CD8-positive, alpha-beta T cell (primary cell): ENCODE measurements at regions of chr1 and their contacts with region 1.

Region 1: GRCh38 chr1:159071970-159072582 is 4.5 kb downstream of the AIM2 start:
- DNase-seq: peak in 2 of 9 experiments; percentile 63 to 73
- ATAC-seq: no peak
- H3K4me3 ChIP-seq: no peak overlapping the region
- H3K4me3 Mint-ChIP-seq: no peak overlapping the region
- H3K27ac ChIP-seq: no peak overlapping the region
- H3K27ac Mint-ChIP-seq: no peak overlapping the region
- H3K4me1 ChIP-seq: peaks cover 14% of the 10 kb centered on the region
- H3K4me1 Mint-ChIP-seq: peaks cover 24% of the 10 kb centered on the region
- H3K27me3 ChIP-seq: no peaks in the 10 kb centered on the region
- H3K27me3 Mint-ChIP-seq: no peaks in the 10 kb centered on the region
- CTCF ChIP-seq: peak; percentile 97

Region 2: GRCh38 chr1:157580179-157580827 is 1491.8 kb before region 1 on chr1:
- CTCF ChIA-PET with region 1: interaction called, 3 read pairs
- POLR2A ChIA-PET with region 1: no interaction called
- intact Hi-C with region 1: loop called in 1 of 2 experiments (anchors 5 kb)
- DNase-seq: peak in 6 of 9 experiments; percentile 5 to 73 (median 22)
- ATAC-seq: no peak
- H3K4me3 ChIP-seq: no peak overlapping the region
- H3K4me3 Mint-ChIP-seq: no peak overlapping the region
- H3K27ac ChIP-seq: no peak overlapping the region
- H3K27ac Mint-ChIP-seq: no peak overlapping the region
- H3K4me1 ChIP-seq: no peaks in the 10 kb centered on the region
- H3K4me1 Mint-ChIP-seq: no peaks in the 10 kb centered on the region
- H3K27me3 ChIP-seq: no peaks in the 10 kb centered on the region
- H3K27me3 Mint-ChIP-seq: peaks cover 3% of the 10 kb centered on the region
- CTCF ChIP-seq: peak; percentile 75

Region 3: GRCh38 chr1:157992031-157992832 is 1079.8 kb before region 1 on chr1:
- CTCF ChIA-PET with region 1: no interaction called
- POLR2A ChIA-PET with region 1: no interaction called
- intact Hi-C with region 1: loop called in 1 of 2 experiments (anchors 5 kb)
- DNase-seq: peak in 8 of 9 experiments; percentile 6 to 59 (median 40)
- ATAC-seq: no peak
- H3K4me3 ChIP-seq: no peak overlapping the region
- H3K4me3 Mint-ChIP-seq: no peak overlapping the region
- H3K27ac ChIP-seq: no peak overlapping the region
- H3K27ac Mint-ChIP-seq: no peak overlapping the region
- H3K4me1 ChIP-seq: peaks cover 5% of the 10 kb centered on the region
- H3K4me1 Mint-ChIP-seq: peaks cover 15% of the 10 kb centered on the region
- H3K27me3 ChIP-seq: peaks cover 4 to 13% of the 10 kb centered on the region in 2 experiments
- H3K27me3 Mint-ChIP-seq: peaks cover 39% of the 10 kb centered on the region
- CTCF ChIP-seq: peak; percentile 70

Region 4: GRCh38 chr1:158149577-158150269 is 922.4 kb before region 1 on chr1:
- CTCF ChIA-PET with region 1: no interaction called
- POLR2A ChIA-PET with region 1: no interaction called
- intact Hi-C with region 1: loop called in 1 of 2 experiments (anchors 10 kb)
- DNase-seq: peak; percentile 24 to 83 (median 59)
- ATAC-seq: peak; percentile 76
- H3K4me3 ChIP-seq: peak overlapping the region; percentile 67 to 72
- H3K4me3 Mint-ChIP-seq: peak overlapping the region; percentile 99
- H3K27ac ChIP-seq: peak overlapping the region in 1 of 2 experiments; percentile 55
- H3K27ac Mint-ChIP-seq: peak overlapping the region; percentile 91
- H3K4me1 ChIP-seq: peaks cover 17% of the 10 kb centered on the region
- H3K4me1 Mint-ChIP-seq: peaks cover 33% of the 10 kb centered on the region
- H3K27me3 ChIP-seq: no peaks in the 10 kb centered on the region
- H3K27me3 Mint-ChIP-seq: peaks cover 5% of the 10 kb centered on the region
- CTCF ChIP-seq: no peak

Region 5: DNA sequence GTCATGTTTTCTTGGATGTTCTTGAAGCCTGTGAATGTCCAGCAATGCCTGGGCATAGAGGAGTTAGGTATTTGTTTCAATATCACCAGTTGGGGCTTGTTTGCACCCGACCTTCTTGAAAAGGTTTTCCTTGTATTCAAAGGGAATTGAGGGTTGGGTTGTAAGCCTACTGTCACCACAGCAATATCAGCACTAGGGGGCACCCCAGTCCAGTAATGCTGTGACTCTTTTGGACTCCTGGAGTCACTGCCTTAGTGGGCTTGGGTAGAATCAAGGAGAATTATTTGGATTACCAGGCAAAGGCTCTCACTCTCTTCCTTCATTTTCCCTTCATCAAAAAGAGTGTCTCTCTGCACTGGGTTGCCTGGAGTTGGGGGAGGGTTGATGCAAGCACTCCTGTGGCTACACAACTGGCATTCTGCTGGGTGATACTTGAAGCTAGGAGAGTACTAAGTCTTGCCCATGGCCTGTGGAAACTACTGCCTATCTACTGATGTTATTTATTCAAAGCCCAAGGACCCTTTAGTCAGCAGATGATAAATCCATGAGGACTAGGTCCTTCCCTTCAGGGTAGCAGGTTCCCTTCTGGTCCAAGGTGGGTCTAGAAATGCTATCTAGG is 565.6 kb before region 1 on chr1:
- CTCF ChIA-PET with region 1: no interaction called
- POLR2A ChIA-PET with region 1: no interaction called
- intact Hi-C with region 1: loop called (anchors 1 to 5 kb)
- DNase-seq: peak in 6 of 9 experiments; percentile 2 to 53 (median 26)
- ATAC-seq: no peak
- H3K4me3 ChIP-seq: no peak overlapping the region
- H3K4me3 Mint-ChIP-seq: no peak overlapping the region
- H3K27ac ChIP-seq: no peak overlapping the region
- H3K27ac Mint-ChIP-seq: peak overlapping the region; percentile 20
- H3K4me1 ChIP-seq: no peaks in the 10 kb centered on the region
- H3K4me1 Mint-ChIP-seq: no peaks in the 10 kb centered on the region
- H3K27me3 ChIP-seq: peaks cover 0 to 1% of the 10 kb centered on the region in 2 experiments
- H3K27me3 Mint-ChIP-seq: peaks cover 14% of the 10 kb centered on the region
- CTCF ChIP-seq: peak; percentile 24

Region 6: DNA sequence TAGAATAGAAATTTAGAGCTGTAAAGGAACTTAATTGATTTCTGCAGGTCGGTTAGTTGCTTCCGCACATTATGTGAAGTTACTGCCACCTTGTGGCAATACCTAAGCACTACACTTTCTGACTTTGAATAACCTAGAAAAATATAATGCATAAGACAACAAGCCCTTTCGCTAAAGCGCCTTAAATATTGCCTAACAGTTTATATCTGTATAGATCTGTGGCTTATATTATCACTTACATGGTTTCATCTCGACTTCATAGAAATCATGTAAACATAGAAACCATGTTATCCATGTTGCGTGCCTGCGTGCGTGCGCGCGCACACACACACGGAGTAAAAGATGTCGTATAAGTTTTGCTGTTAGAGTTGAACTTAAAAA is 73.3 kb before region 1 on chr1:
- CTCF ChIA-PET with region 1: interaction called, 13 read pairs
- POLR2A ChIA-PET with region 1: no interaction called
- intact Hi-C with region 1: loop called (anchors 1 to 5 kb)
- DNase-seq: peak in 7 of 9 experiments; percentile 13 to 82 (median 38)
- ATAC-seq: peak; percentile 85
- H3K4me3 ChIP-seq: no peak overlapping the region
- H3K4me3 Mint-ChIP-seq: peak overlapping the region; percentile 54
- H3K27ac ChIP-seq: no peak overlapping the region
- H3K27ac Mint-ChIP-seq: peak overlapping the region; percentile 61
- H3K4me1 ChIP-seq: peaks cover 6% of the 10 kb centered on the region
- H3K4me1 Mint-ChIP-seq: peaks cover 30% of the 10 kb centered on the region
- H3K27me3 ChIP-seq: no peaks in the 10 kb centered on the region
- H3K27me3 Mint-ChIP-seq: no peaks in the 10 kb centered on the region
- CTCF ChIP-seq: peak; percentile 91

Region 7: GRCh38 chr1:159056069-159056698 is 15.9 kb before region 1 on chr1:
- CTCF ChIA-PET with region 1: interaction called, 11 read pairs
- POLR2A ChIA-PET with region 1: no interaction called
- intact Hi-C with region 1: no loop called
- DNase-seq: peak in 1 of 9 experiments; percentile 21
- ATAC-seq: no peak
- H3K4me3 ChIP-seq: no peak overlapping the region
- H3K4me3 Mint-ChIP-seq: no peak overlapping the region
- H3K27ac ChIP-seq: peak overlapping the region in 1 of 2 experiments; percentile 51
- H3K27ac Mint-ChIP-seq: peak overlapping the region; percentile 53
- H3K4me1 ChIP-seq: no peaks in the 10 kb centered on the region
- H3K4me1 Mint-ChIP-seq: peaks cover 20% of the 10 kb centered on the region
- H3K27me3 ChIP-seq: no peaks in the 10 kb centered on the region
- H3K27me3 Mint-ChIP-seq: no peaks in the 10 kb centered on the region
- CTCF ChIP-seq: no peak